CD4-positive, alpha-beta T cell (primary cell): ENCODE measurements at regions of chr4 and their contacts with region 1.

Region 1: DNA sequence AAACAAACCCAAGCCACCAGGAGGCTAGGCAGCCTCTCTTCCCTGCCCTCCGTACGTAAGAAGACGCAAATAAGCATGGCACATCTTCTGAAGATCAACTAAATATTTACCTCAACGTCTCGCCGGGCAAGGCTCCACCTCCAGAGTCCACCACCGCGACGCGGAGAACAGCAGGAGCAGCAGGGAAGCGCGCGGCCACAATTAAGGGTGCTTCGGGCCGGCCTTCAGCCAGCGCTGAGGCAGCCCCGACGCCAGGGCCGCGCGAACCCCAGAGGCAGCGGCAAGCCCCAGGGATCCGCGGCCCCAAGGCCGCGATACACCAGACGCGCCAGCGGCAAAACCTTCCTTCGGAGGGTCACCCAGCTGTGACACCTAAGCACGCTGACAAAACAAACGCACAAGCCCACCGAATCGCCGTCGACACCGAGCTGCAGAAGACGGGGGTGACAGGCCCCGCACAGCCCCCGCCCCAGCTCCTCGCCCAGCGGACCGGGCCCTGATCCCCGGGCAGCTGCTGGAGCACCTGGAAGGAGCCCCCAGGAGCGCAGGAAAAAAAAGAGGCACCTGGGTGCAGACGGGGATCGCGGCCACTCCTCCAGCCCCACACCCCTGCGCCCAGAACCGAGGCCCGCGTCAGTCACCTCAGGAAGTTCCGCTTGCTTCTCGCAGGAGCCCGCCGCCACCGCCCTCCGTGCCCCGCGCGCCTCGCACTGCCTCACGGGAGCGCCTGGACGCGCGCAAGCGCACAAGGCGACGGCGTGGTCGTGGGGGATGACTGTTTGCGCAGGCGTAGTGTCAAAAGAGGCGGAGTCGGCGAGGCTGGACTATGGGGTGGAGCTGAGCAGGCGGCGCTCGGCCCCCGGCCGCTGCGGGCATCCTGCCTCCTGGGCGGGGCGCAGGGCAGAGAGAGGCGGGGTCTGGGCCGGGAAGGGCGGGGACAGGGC is at the starts of genes HAUS3 and POLN:
- DNase-seq: peak; percentile 98 to 100 (median 99)
- ATAC-seq: peak; percentile 87
- H3K4me3 ChIP-seq: peak within 1 kb of the TSS; percentile 95
- H3K4me3 Mint-ChIP-seq: peak within 1 kb of the TSS; percentile 92
- H3K27ac ChIP-seq: peak within 1 kb of the TSS; percentile 84 to 88
- H3K27ac Mint-ChIP-seq: peak within 1 kb of the TSS; percentile 95
- H3K4me1 ChIP-seq: peaks cover 30% of the 10 kb centered on the region
- H3K4me1 Mint-ChIP-seq: peaks cover 70% of the 10 kb centered on the region
- H3K27me3 ChIP-seq: no peaks in the 10 kb centered on the region
- H3K27me3 Mint-ChIP-seq: no peaks in the 10 kb centered on the region
- CTCF ChIP-seq: no peak
- total RNA-seq, gene HAUS3: 143 to 148 TPM
- total RNA-seq, gene POLN: 2.1 to 2.3 TPM

Region 2: GRCh38 chr4:2151544-2151943 is 90.1 kb before region 1 on chr4:
- CTCF ChIA-PET with region 1: no interaction called
- POLR2A ChIA-PET with region 1: no interaction called
- intact Hi-C with region 1: no loop called
- DNase-seq: no peak
- ATAC-seq: no peak
- H3K4me3 ChIP-seq: no peak overlapping the region
- H3K4me3 Mint-ChIP-seq: no peak overlapping the region
- H3K27ac ChIP-seq: no peak overlapping the region
- H3K27ac Mint-ChIP-seq: no peak overlapping the region
- H3K4me1 ChIP-seq: no peaks in the 10 kb centered on the region
- H3K4me1 Mint-ChIP-seq: no peaks in the 10 kb centered on the region
- H3K27me3 ChIP-seq: no peaks in the 10 kb centered on the region
- H3K27me3 Mint-ChIP-seq: no peaks in the 10 kb centered on the region
- CTCF ChIP-seq: no peak

Region 3: DNA sequence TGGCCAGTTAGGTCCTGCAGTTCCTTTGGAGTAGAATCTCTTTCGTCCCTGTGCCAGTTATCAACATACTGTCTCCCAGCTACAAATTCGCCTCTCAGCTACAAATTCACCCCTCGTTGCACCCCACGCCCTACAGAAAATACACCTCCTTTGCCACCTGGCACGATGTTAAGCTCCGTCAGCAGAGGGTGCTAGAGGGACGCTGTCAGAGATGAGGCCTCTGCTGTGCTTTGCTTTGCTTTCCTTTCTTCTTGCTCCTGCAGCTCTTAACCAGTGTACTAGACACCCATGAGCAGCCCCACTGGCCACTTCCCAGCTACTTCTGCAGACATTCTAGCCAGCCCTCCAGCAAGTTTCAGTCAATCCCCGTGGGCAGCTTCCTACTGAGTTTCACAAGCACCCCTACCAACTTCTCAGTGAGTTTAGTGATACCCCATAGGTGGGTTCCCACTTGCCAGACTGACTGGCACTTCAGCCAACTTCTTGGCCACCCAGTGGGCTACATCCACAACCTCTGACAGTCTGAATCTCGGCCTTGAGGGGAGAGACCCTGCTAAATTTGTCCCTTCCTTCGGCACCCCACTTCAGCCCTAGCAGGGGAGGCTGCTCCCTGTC is 21.6 kb before region 1 on chr4:
- CTCF ChIA-PET with region 1: interaction called, 38 read pairs
- POLR2A ChIA-PET with region 1: interaction called, 14 read pairs
- intact Hi-C with region 1: loop called (anchors 2 kb)
- DNase-seq: peak; percentile 71 to 88 (median 78)
- ATAC-seq: peak; percentile 98
- H3K4me3 ChIP-seq: no peak overlapping the region
- H3K4me3 Mint-ChIP-seq: no peak overlapping the region
- H3K27ac ChIP-seq: no peak overlapping the region
- H3K27ac Mint-ChIP-seq: no peak overlapping the region
- H3K4me1 ChIP-seq: peaks cover 6% of the 10 kb centered on the region
- H3K4me1 Mint-ChIP-seq: peaks cover 7% of the 10 kb centered on the region
- H3K27me3 ChIP-seq: no peaks in the 10 kb centered on the region
- H3K27me3 Mint-ChIP-seq: no peaks in the 10 kb centered on the region
- CTCF ChIP-seq: peak; percentile 88

Region 4: GRCh38 chr4:2281575-2282343 is 40.1 kb after region 1 on chr4:
- CTCF ChIA-PET with region 1: interaction called, 6 read pairs
- POLR2A ChIA-PET with region 1: interaction called, 21 read pairs
- intact Hi-C with region 1: loop called in 1 of 2 experiments (anchors 1 kb)
- DNase-seq: peak; percentile 74 to 97 (median 84)
- ATAC-seq: peak; percentile 87
- H3K4me3 ChIP-seq: peak overlapping the region; percentile 13
- H3K4me3 Mint-ChIP-seq: peak overlapping the region; percentile 78
- H3K27ac ChIP-seq: peak overlapping the region; percentile 87 to 96
- H3K27ac Mint-ChIP-seq: peak overlapping the region; percentile 95
- H3K4me1 ChIP-seq: peaks cover 57% of the 10 kb centered on the region
- H3K4me1 Mint-ChIP-seq: peaks cover 38% of the 10 kb centered on the region
- H3K27me3 ChIP-seq: no peaks in the 10 kb centered on the region
- H3K27me3 Mint-ChIP-seq: no peaks in the 10 kb centered on the region
- CTCF ChIP-seq: peak; percentile 25

Region 5: DNA sequence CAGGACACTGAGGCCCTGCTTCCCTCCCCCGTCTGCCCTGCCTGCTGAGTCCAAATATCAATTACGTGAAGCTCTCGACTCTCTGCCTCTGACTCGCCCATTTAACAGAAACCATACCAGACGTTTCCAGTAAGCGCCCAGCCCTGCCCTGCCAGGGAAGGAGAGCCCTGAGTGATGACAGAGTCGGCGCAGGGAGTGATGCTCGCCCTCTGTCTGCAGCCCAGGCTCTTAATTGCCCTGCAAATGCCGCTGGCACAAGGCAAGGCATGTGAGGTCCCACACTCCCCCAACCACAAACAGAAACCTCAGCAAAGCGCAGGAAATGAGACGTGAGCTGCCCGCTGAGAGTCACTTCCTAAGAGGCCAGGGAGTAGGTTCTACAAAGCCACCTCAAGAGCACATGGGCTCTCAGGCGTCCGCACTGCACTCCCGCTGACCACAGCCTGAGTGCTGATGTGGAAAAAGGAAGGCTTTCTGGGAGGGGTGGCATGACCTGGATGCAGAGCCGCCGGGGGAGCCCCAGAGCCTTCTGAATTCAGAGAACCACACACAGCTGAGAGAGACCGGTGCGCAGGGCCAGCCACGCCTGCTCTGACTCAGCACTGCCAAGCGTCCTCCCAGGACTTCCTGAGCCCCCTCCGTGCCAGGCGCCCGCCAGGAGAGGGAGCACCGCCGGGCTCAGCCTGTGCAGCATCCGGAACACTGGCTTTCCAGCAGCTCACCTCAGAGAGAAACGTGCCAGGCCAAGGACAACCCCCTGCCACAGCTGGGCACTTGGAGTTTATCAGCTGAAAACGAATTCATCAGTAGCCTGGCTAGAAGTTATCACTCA is 171.4 kb after region 1 on chr4:
- CTCF ChIA-PET with region 1: interaction called, 6 read pairs
- POLR2A ChIA-PET with region 1: interaction called, 23 read pairs
- intact Hi-C with region 1: loop called (anchors 1 to 2 kb)
- DNase-seq: peak; percentile 63 to 98 (median 84)
- ATAC-seq: peak; percentile 73
- H3K4me3 ChIP-seq: peak overlapping the region; percentile 52
- H3K4me3 Mint-ChIP-seq: peak overlapping the region; percentile 74
- H3K27ac ChIP-seq: peak overlapping the region; percentile 81 to 96
- H3K27ac Mint-ChIP-seq: peak overlapping the region; percentile 94
- H3K4me1 ChIP-seq: peaks cover 90% of the 10 kb centered on the region
- H3K4me1 Mint-ChIP-seq: peaks cover 72% of the 10 kb centered on the region
- H3K27me3 ChIP-seq: peaks cover 6 to 9% of the 10 kb centered on the region in 2 experiments
- H3K27me3 Mint-ChIP-seq: peaks cover 4% of the 10 kb centered on the region
- CTCF ChIP-seq: no peak

Region 6: DNA sequence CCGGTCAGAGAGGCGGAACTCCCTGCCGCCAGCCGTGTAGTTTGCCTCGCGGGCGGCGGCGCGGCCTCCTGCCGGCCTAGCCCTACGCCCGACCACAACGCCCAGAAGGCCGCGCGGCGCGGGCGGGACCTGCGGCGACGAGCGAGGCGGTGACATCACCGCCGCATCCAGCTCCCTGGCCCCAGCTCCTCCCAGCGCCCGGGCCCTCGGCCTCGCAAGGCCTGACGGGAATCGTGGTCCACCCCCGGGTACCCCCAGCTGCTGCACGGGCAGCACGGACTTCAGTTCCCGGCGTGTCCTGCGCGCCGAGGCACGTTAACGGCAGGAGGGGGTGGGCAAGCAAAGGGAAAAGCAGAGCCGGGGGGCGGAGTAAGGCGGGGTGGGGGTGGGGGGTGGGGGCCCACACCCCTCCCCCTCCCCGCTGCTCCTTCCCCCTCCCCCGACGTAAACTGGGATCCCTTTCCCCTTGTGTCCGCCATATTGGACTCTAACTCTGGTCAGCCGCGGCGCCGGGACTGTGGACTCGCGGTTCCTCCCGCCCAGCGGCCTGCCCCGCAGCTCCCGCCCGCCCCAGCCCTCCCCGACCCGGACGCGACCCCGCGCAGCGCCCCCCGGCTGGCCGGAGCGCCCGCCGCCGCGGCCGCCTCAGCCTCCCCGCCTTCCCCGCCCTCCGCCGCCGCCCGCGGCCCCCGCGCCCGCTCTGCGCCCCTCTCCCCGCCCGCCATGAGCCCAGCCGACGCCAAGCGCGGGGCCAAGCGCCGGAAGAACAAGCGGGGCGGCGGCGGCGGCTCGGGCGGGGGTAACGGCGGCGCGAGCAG is 294.7 kb after region 1 on chr4 and contains the start of gene FAM193A:
- CTCF ChIA-PET with region 1: no interaction called
- POLR2A ChIA-PET with region 1: interaction called, 9 read pairs
- intact Hi-C with region 1: loop called (anchors 1 to 10 kb)
- DNase-seq: peak; percentile 96 to 100 (median 98)
- ATAC-seq: peak; percentile 95
- H3K4me3 ChIP-seq: peak within 1 kb of the TSS; percentile 61
- H3K4me3 Mint-ChIP-seq: peak within 1 kb of the TSS; percentile 95
- H3K27ac ChIP-seq: peak within 1 kb of the TSS; percentile 26 to 70
- H3K27ac Mint-ChIP-seq: peak within 1 kb of the TSS; percentile 89
- H3K4me1 ChIP-seq: peaks cover 43% of the 10 kb centered on the region
- H3K4me1 Mint-ChIP-seq: peaks cover 20% of the 10 kb centered on the region
- H3K27me3 ChIP-seq: no peaks in the 10 kb centered on the region
- H3K27me3 Mint-ChIP-seq: no peaks in the 10 kb centered on the region
- CTCF ChIP-seq: no peak
- total RNA-seq, gene FAM193A: 28.4 to 30.0 TPM

Region 7: GRCh38 chr4:3074078-3074795 is 832.6 kb after region 1 on chr4 and contains the starts of genes HTT and HTT-AS:
- CTCF ChIA-PET with region 1: no interaction called
- POLR2A ChIA-PET with region 1: no interaction called
- intact Hi-C with region 1: loop called in 1 of 2 experiments (anchors 5 kb)
- DNase-seq: peak; percentile 93 to 99 (median 98)
- ATAC-seq: peak; percentile 84
- H3K4me3 ChIP-seq: peak within 1 kb of the TSS; percentile 80
- H3K4me3 Mint-ChIP-seq: peak within 1 kb of the TSS; percentile 92
- H3K27ac ChIP-seq: peak within 1 kb of the TSS; percentile 72 to 87
- H3K27ac Mint-ChIP-seq: peak within 1 kb of the TSS; percentile 86
- H3K4me1 ChIP-seq: peaks cover 23% of the 10 kb centered on the region
- H3K4me1 Mint-ChIP-seq: peaks cover 26% of the 10 kb centered on the region
- H3K27me3 ChIP-seq: no peaks in the 10 kb centered on the region
- H3K27me3 Mint-ChIP-seq: no peaks in the 10 kb centered on the region
- CTCF ChIP-seq: no peak
- total RNA-seq, gene HTT: 56.9 to 62.6 TPM
- total RNA-seq, gene HTT-AS: not detected